CD14-positive monocyte (primary cell): ENCODE measurements at regions of chr1 and their contacts with region 1.

Region 1: DNA sequence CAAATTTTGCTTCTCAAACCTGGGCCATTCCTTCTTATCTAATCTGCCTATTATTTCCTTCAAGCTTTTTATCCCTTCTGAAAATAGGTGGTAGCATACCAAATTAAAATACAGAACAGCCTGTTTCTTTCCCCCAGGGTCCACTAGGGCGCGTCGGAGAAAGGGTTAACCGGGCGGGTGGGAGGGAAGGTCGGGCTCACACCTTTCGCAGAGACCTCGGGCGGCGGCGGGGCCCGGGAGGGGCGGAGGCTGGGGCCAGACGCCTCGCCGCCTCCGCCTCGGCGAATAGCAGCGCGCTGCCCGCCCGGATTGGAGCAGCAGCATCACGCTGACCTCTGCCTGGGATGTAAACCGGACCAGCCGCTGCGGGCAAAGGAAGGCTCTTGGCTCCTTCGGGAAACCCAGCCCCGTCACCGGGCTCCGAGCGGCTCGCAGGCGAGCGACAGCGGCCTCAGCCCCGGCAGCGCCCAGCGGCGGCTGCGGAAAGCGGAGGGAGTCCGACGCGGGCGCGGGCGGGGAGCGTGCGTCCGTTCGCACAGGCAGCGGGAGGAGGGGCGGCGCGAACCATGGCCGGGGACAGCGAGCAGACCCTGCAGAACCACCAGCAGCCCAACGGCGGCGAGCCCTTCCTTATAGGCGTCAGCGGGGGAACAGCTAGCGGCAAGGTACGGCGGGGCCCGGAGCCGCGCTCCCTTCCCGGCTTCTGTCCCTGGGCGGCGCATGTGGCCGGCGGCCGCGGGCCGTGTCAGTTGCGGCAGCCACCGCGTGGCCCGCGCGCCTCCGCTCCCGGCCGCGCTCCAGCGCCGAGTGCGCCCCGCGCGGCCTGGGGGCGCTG is at the start of gene UCK2:
- DNase-seq: peak; percentile 46 to 67 (median 56)
- H3K4me3 ChIP-seq: peak within 1 kb of the TSS; percentile 43 to 84 (median 75)
- H3K4me3 Mint-ChIP-seq: peak within 1 kb of the TSS; percentile 97
- H3K27ac ChIP-seq: peak within 1 kb of the TSS; percentile 70 to 82
- H3K27ac Mint-ChIP-seq: peak within 1 kb of the TSS; percentile 77 to 91 (median 88)
- H3K4me1 ChIP-seq: peaks cover 17 to 23% of the 10 kb centered on the region in 2 donors
- H3K4me1 Mint-ChIP-seq: peaks cover 21% of the 10 kb centered on the region
- H3K27me3 ChIP-seq: no peaks in the 10 kb centered on the region
- H3K27me3 Mint-ChIP-seq: peaks cover 0 to 3% (median 0%) of the 10 kb centered on the region in 3 donors
- CTCF ChIP-seq: peak; percentile 23
- polyA plus RNA-seq, gene UCK2: 12.4 to 15.4 (median 12.8) TPM

Region 2: GRCh38 chr1:165768513-165769394 is 58.7 kb before region 1 on chr1 and contains the start of gene TMCO1:
- intact Hi-C with region 1: loop called (anchors 5 to 10 kb)
- DNase-seq: peak; percentile 98 to 99 (median 99)
- H3K4me3 ChIP-seq: peak within 1 kb of the TSS; percentile 50 to 98 (median 94)
- H3K4me3 Mint-ChIP-seq: peak within 1 kb of the TSS; percentile 85 to 99
- H3K27ac ChIP-seq: peak within 1 kb of the TSS; percentile 92 to 99
- H3K27ac Mint-ChIP-seq: peak within 1 kb of the TSS; percentile 96 to 99 (median 98)
- H3K4me1 ChIP-seq: peaks cover 15 to 32% of the 10 kb centered on the region in 2 donors
- H3K4me1 Mint-ChIP-seq: peaks cover 42% of the 10 kb centered on the region
- H3K27me3 ChIP-seq: no peaks in the 10 kb centered on the region
- H3K27me3 Mint-ChIP-seq: no peaks in the 10 kb centered on the region
- CTCF ChIP-seq: peak; percentile 17
- polyA plus RNA-seq, gene TMCO1: 24.1 to 154 (median 146) TPM

Region 3: GRCh38 chr1:165871311-165872067 is 44.0 kb after region 1 on chr1:
- intact Hi-C with region 1: loop called (anchors 5 to 10 kb)
- DNase-seq: peak; percentile 71 to 87 (median 79)
- H3K4me3 ChIP-seq: peak overlapping the region in 2 of 3 experiments; percentile 10 to 55
- H3K4me3 Mint-ChIP-seq: peak overlapping the region; percentile 25 to 73
- H3K27ac ChIP-seq: peak overlapping the region; percentile 19 to 71
- H3K27ac Mint-ChIP-seq: peak overlapping the region; percentile 73 to 90 (median 87)
- H3K4me1 ChIP-seq: peaks cover 22 to 32% of the 10 kb centered on the region in 2 donors
- H3K4me1 Mint-ChIP-seq: peaks cover 41% of the 10 kb centered on the region
- H3K27me3 ChIP-seq: no peaks in the 10 kb centered on the region
- H3K27me3 Mint-ChIP-seq: peaks cover 0 to 3% (median 0%) of the 10 kb centered on the region in 3 donors
- CTCF ChIP-seq: peak; percentile 56